B cell (primary cell): ENCODE measurements at regions of chr3 and their contacts with region 1.

Region 1: DNA sequence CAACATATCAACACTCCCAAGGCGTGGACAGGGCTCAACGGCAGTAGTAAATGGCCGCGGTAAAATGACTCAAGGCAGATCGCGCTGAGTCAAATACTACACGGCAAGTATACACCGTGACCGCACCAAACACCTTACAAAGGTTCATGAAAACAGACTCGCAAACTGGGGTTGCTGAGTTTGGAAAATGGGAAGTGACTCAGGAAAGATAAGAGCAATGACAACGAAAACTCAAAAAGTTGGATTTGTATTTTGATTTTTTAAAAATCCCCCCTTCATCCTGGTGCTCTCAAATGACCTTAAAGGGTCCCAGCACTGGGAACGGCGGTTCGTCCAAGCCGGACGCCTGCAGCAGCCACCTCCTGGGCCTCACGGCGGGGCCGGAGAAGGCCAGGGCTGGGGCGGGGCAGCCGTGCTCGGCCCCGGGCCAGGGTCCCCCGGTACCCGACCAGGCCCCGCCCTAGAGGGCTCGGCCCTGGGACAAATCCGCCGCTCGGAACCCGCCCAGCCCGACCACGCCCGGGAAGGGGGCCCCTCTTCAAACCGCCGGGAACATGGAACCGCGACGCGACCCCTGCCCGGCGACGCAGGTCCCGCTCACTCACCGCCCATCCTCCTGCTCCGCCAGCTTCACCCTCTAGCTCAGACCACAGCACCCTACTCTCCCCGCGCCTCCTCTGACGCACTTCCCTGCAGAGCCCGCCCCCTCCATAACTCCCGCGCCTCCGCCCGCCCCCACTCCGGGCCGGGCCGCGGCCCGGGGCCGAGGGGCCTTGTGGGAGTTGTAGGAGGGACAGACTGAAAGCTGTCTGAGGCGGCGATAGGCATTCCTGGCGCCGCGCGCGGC is at the start of gene CLDND1:
- DNase-seq: peak; percentile 96
- ATAC-seq: peak; percentile 98
- H3K4me3 ChIP-seq: peak within 1 kb of the TSS; percentile 57 to 88 (median 84)
- H3K4me3 Mint-ChIP-seq: peak within 1 kb of the TSS; percentile 97
- H3K27ac ChIP-seq: peak within 1 kb of the TSS; percentile 76 to 84
- H3K27ac Mint-ChIP-seq: peak within 1 kb of the TSS; percentile 93
- H3K4me1 ChIP-seq: peaks cover 13 to 15% of the 10 kb centered on the region in 2 donors
- H3K4me1 Mint-ChIP-seq: peaks cover 37% of the 10 kb centered on the region
- H3K27me3 ChIP-seq: peaks cover 0 to 3% (median 0%) of the 10 kb centered on the region in 4 experiments
- H3K27me3 Mint-ChIP-seq: no peaks in the 10 kb centered on the region
- CTCF ChIP-seq: no peak
- total RNA-seq, gene CLDND1: 132 and 134 TPM in 2 replicates

Region 2: DNA sequence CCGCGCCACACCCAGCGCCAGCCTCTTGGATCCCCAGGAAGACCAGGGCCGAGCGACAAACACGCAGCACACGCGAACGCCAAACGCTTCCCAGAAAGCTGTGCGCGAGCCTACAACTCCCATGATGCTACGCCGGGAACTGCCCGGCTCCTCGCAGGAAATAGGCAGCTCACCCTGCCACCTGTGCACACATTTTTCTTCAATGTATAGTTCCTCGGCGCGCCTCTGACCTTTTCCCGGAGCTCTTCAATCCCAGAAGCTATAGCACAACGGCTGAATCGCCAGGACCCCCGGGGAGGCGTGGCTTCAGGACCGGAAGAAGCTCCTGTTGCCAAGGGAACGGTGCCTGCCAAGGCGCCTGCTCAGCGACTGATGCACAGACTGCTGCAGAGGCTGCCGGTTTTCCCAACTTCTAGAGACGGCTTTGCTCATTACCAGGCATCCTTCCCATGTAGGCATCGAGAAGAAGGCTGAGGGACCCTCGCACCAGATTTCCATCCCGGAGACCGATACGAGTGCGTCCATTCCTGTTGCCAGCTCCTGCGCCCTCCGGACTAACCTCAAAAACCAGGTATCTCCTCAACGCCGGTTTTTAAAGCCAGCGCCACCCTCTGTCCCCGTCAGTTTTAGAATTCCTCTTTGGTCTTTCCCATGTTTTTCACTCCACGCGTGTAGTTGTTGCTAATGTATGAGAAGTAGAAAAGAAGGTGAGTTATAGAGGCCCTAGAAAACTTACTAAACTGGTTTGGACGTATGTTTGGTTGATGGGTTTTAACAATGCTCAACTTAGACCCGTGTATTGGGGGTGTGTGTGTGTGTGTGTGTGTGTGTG is 757.8 kb before region 1 on chr3 and contains the start of gene ARL6:
- CTCF ChIA-PET with region 1: no interaction called
- POLR2A ChIA-PET with region 1: no interaction called
- intact Hi-C with region 1: loop called (anchors 1 kb)
- DNase-seq: peak; percentile 85
- ATAC-seq: peak; percentile 87
- H3K4me3 ChIP-seq: peak within 1 kb of the TSS; percentile 74 to 99 (median 96)
- H3K4me3 Mint-ChIP-seq: peak within 1 kb of the TSS; percentile 98
- H3K27ac ChIP-seq: peak within 1 kb of the TSS; percentile 69 to 74
- H3K27ac Mint-ChIP-seq: peak within 1 kb of the TSS; percentile 96
- H3K4me1 ChIP-seq: peaks cover 13% of the 10 kb centered on the region in 2 donors
- H3K4me1 Mint-ChIP-seq: peaks cover 30% of the 10 kb centered on the region
- H3K27me3 ChIP-seq: no peaks in the 10 kb centered on the region
- H3K27me3 Mint-ChIP-seq: no peaks in the 10 kb centered on the region
- CTCF ChIP-seq: no peak
- total RNA-seq, gene ARL6: 5.6 and 7.5 TPM in 2 replicates

Region 3: DNA sequence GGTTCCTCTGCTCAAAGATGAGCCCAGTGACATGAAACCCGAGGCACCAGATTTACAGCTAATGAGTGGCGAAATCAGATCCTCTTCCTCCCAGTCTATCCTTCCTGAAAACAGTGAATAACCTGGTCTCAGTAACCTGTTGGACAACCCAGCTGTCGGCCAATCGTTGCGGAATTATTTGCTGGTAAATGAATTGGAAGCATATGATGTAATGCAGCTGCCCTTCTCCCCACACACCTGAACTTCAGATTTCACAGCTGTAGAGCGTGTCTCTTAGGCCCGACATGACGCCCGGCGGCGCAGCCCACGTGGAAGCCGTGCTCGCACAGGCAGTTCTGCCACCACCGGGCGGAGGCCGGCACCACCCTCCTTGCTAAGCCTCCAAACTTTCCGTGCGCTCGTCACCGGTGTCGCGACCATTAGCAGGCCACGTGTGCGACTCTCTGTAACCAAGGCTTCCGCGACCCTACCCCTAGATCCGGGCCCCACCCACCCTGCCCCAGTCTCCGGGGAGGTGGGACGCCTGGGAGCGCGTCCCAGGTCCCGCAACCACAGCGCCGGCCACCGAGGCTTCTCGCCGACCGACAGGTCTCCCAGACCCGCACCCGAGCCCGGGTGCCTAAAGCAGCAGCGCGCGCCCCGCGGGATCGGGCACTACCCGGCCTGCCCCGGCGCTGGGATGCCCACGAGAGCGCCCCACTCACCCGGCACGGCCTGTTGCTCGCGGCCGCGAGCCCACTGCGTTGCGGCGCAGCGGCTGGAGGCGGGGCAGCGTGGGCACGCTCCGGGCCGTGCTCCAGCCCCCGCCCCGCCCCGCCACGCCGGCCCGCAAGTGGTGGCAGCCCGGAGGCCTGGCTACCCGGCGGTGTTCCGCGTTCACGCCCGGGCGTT is 550.5 kb before region 1 on chr3 and contains the start of gene RIOX2:
- CTCF ChIA-PET with region 1: no interaction called
- POLR2A ChIA-PET with region 1: no interaction called
- intact Hi-C with region 1: loop called (anchors 2 kb)
- DNase-seq: peak; percentile 83
- ATAC-seq: peak; percentile 92
- H3K4me3 ChIP-seq: peak within 1 kb of the TSS; percentile 13 to 73 (median 64)
- H3K4me3 Mint-ChIP-seq: peak within 1 kb of the TSS; percentile 98
- H3K27ac ChIP-seq: peak within 1 kb of the TSS; percentile 49 to 77
- H3K27ac Mint-ChIP-seq: peak within 1 kb of the TSS; percentile 96
- H3K4me1 ChIP-seq: peaks cover 15 to 16% of the 10 kb centered on the region in 2 donors
- H3K4me1 Mint-ChIP-seq: peaks cover 38% of the 10 kb centered on the region
- H3K27me3 ChIP-seq: no peaks in the 10 kb centered on the region
- H3K27me3 Mint-ChIP-seq: no peaks in the 10 kb centered on the region
- CTCF ChIP-seq: no peak
- total RNA-seq, gene RIOX2: 23.6 and 27.8 TPM in 2 replicates

Region 4: GRCh38 chr3:98540346-98540745 is 17.9 kb after region 1 on chr3:
- CTCF ChIA-PET with region 1: interaction called, 3 read pairs
- POLR2A ChIA-PET with region 1: interaction called, 4 read pairs
- intact Hi-C with region 1: loop called (anchors 1 kb)
- DNase-seq: peak; percentile 62
- ATAC-seq: peak; percentile 72
- H3K4me3 ChIP-seq: no peak overlapping the region
- H3K4me3 Mint-ChIP-seq: peak overlapping the region; percentile 2
- H3K27ac ChIP-seq: peak overlapping the region in 1 of 2 donors; percentile 12
- H3K27ac Mint-ChIP-seq: peak overlapping the region; percentile 7
- H3K4me1 ChIP-seq: no peaks in the 10 kb centered on the region
- H3K4me1 Mint-ChIP-seq: peaks cover 16% of the 10 kb centered on the region
- H3K27me3 ChIP-seq: no peaks in the 10 kb centered on the region
- H3K27me3 Mint-ChIP-seq: no peaks in the 10 kb centered on the region
- CTCF ChIP-seq: no peak

Region 5: GRCh38 chr3:98593046-98593936 is 70.8 kb after region 1 on chr3 and contains the start of gene CPOX:
- CTCF ChIA-PET with region 1: no interaction called
- POLR2A ChIA-PET with region 1: interaction called, 7 read pairs
- intact Hi-C with region 1: loop called (anchors 1 kb)
- DNase-seq: peak; percentile 79
- ATAC-seq: peak; percentile 93
- H3K4me3 ChIP-seq: peak within 1 kb of the TSS; percentile 63 to 90 (median 69)
- H3K4me3 Mint-ChIP-seq: peak within 1 kb of the TSS; percentile 98
- H3K27ac ChIP-seq: peak within 1 kb of the TSS; percentile 60 to 76
- H3K27ac Mint-ChIP-seq: peak within 1 kb of the TSS; percentile 87
- H3K4me1 ChIP-seq: peaks cover 9 to 20% of the 10 kb centered on the region in 2 donors
- H3K4me1 Mint-ChIP-seq: peaks cover 26% of the 10 kb centered on the region
- H3K27me3 ChIP-seq: no peaks in the 10 kb centered on the region
- H3K27me3 Mint-ChIP-seq: no peaks in the 10 kb centered on the region
- CTCF ChIP-seq: no peak
- total RNA-seq, gene CPOX: 17.5 and 22.0 TPM in 2 replicates